Right lobe of liver (tissue), 6 donors: ENCODE measurements at regions of chr3 and their contacts with region 1.

Region 1: GRCh38 chr3:69306239-69307185 is 79.4 kb downstream of the FRMD4B start:
- DNase-seq: peak; percentile 59 to 78 (median 71)
- ATAC-seq: peak; percentile 100
- H3K4me3 ChIP-seq: no peak overlapping the region
- H3K27ac ChIP-seq: no peak overlapping the region
- H3K4me1 ChIP-seq: peaks cover 0 to 4% (median 0%) of the 10 kb centered on the region in 4 donors
- H3K27me3 ChIP-seq: no peaks in the 10 kb centered on the region
- CTCF ChIP-seq: peak; percentile 94 to 97 (median 95)
- POLR2A ChIP-seq: no peak

Region 2: GRCh38 chr3:69410250-69410649 is 103.7 kb after region 1 on chr3:
- intact Hi-C with region 1: loop called in 1 of 2 experiments (anchors 10 kb)
- DNase-seq: peak; percentile 43 to 77 (median 58)
- ATAC-seq: peak; percentile 92 to 93 (median 92)
- H3K4me3 ChIP-seq: no peak overlapping the region
- H3K27ac ChIP-seq: no peak overlapping the region
- H3K4me1 ChIP-seq: peaks cover 0 to 8% (median 0%) of the 10 kb centered on the region in 4 donors
- H3K27me3 ChIP-seq: no peaks in the 10 kb centered on the region
- CTCF ChIP-seq: peak; percentile 77 to 86 (median 80)
- POLR2A ChIP-seq: no peak

Region 3: GRCh38 chr3:69761896-69762767 is 455.6 kb after region 1 on chr3:
- intact Hi-C with region 1: no loop called
- DNase-seq: no peak
- ATAC-seq: peak in 1 of 4 donors; percentile 48
- H3K4me3 ChIP-seq: no peak overlapping the region
- H3K27ac ChIP-seq: no peak overlapping the region
- H3K4me1 ChIP-seq: no peaks in the 10 kb centered on the region
- H3K27me3 ChIP-seq: no peaks in the 10 kb centered on the region
- CTCF ChIP-seq: no peak
- POLR2A ChIP-seq: no peak